ENCODE measurements at regions of chr12 and their contacts with region 1.

Region 1: GRCh38 chr12:14952299-14952921 is 9.0 kb downstream of the ARHGDIB start:
- DNase-seq: no peak
- H3K4me3 ChIP-seq: peak overlapping the region; percentile 6
- H3K27ac ChIP-seq: peak overlapping the region; percentile 92
- H3K4me1 ChIP-seq: peaks cover 100% of the 10 kb centered on the region
- H3K27me3 ChIP-seq: no peaks in the 10 kb centered on the region
- CTCF ChIP-seq: no peak

Region 2: DNA sequence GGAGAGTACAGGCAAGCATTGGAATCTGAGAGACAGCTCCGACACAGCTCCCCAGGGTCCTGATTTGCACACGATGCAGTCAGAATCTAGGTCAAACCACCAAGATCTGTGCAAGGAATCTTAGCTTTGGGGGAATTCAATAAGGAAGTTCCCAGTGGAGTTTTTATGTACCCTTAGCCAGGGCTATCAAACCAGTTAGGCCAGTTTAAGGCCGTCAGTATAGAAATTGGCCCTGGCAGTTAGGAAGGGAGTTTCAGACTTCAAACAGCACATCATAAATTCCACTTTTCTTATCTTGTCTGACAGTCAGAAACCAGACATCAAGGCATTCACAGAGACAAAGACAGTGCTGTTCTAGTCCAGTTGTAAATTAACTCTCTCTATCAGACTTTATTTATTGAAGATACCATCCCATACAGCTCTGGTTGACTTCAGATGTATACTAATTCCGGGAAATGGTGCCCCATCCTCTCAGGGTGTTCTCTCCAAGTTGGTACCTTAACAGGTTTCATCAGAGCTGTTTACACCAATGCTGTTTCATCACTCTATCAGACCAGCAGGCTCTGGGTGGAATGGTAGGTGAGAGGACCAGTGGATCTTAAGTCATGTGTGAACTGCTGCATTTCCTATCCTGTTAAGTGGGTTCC is 744.4 kb before region 1 on chr12:
- intact Hi-C with region 1: no loop called
- DNase-seq: no peak
- H3K4me3 ChIP-seq: no peak overlapping the region
- H3K27ac ChIP-seq: no peak overlapping the region
- H3K4me1 ChIP-seq: no peaks in the 10 kb centered on the region
- H3K27me3 ChIP-seq: no peaks in the 10 kb centered on the region
- CTCF ChIP-seq: no peak

Region 3: GRCh38 chr12:14901228-14901562 is 51.2 kb before region 1 on chr12:
- intact Hi-C with region 1: loop called (anchors 10 kb)
- DNase-seq: peak; percentile 35
- H3K4me3 ChIP-seq: no peak overlapping the region
- H3K27ac ChIP-seq: peak overlapping the region; percentile 83
- H3K4me1 ChIP-seq: peaks cover 70% of the 10 kb centered on the region
- H3K27me3 ChIP-seq: no peaks in the 10 kb centered on the region
- CTCF ChIP-seq: peak; percentile 50

Region 4: GRCh38 chr12:15056218-15056617 is 103.8 kb after region 1 on chr12:
- intact Hi-C with region 1: no loop called
- DNase-seq: no peak
- H3K4me3 ChIP-seq: no peak overlapping the region
- H3K27ac ChIP-seq: no peak overlapping the region
- H3K4me1 ChIP-seq: no peaks in the 10 kb centered on the region
- H3K27me3 ChIP-seq: no peaks in the 10 kb centered on the region
- CTCF ChIP-seq: no peak

Measured in left ventricle myocardium inferior (tissue), 1 donor.